GM10248 (cell line): ENCODE measurements at regions of chr17 and their contacts with region 1.

Region 1: GRCh38 chr17:44400226-44400847 is 10.9 kb upstream of the ITGA2B start:
- DNase-seq: no peak
- CTCF ChIP-seq: peak; percentile 62

Region 2: DNA sequence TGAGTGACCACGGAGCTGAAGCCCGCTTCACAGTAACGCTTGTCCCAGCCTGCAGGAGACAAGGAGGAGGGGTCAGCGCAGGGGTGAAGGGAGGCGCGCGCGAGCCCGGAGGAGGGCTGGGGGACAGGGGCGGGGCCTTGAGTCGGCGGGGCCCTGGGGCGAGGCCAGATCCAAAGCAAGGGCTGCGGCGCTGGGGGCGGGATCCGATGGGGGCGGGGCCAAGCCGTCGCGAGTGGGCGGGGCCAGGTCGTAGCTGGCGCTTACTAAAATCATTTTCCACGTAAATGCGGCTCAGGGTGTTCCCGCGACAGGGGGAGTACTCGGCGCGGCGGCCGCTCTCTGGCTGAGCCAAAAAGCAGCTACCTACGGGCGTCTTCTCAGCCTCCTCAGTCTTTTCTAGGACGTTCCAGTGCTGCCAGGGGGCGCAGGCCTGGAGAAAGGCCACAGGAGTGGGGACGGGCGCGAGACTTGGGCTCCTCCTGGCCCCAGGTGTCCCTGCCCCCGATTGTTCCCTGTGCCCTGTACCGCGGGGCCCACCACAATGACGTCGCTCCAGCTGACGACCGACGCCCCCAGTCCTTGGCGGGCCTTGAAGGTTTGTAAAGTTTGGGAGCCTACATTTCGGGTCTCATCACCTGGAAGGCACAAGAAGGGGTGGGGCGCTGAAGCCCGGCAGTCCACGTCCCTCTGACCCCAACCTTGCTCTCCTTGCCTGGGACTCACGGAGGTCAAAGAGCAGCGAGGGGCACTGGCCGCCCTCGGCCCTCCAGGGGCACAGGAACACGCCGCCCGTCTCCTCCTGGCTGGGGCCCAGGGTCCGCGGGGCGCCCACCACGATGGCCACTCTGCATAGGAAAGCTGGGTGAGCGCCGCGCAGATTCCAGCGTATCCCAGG is 14.8 kb before region 1 on chr17:
- CTCF ChIA-PET with region 1: interaction called, 17 read pairs
- POLR2A ChIA-PET with region 1: no interaction called
- DNase-seq: peak; percentile 93
- CTCF ChIP-seq: peak; percentile 4